Sigmoid colon (tissue), 7 donors: ENCODE measurements at regions of chr10 and their contacts with region 1.

Region 1: DNA sequence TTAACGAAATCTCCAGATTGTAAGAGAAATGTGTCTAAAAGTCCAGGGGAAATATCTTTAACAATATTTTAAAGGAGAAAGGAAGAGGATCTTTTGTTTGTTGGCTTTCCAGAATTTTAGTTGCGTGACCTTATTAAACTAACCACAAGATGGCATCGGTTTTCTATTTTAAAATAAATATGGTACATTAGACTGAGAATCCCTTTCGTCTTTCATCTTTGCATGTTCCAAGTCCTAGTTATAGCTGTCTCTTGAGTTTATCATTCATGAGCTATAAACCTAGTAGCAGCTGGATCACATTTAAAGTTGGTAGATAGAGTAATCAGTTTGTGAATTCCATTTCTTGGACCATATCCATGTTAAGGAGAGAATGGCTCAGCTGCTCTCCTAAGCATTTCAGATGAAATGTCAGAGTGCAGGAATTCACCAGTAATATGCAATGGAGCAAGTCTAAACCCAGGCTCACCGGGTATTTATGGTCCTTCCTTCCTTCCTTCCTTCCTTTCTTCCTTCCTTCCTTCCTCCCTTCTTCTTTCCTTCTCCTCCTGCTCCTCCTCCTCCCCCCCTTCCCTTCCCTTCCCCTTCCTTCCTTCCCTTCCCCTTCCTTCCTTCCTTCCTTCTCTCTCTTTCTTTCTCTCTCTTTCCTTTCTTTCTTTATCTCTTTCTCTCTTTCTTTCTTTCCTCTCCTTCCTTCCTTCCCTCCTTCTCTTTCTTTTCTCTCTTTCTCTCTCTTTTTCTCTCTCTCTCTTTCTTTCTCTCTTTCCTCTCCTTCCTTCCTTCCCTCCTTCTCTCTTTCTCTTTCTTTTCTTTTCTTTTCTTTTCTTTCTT is 57.8 kb upstream of the RAB18 start:
- DNase-seq: no peak
- H3K4me3 ChIP-seq: no peak overlapping the region
- H3K27ac ChIP-seq: peak overlapping the region in 3 of 4 donors; percentile 22 to 62 (median 45)
- H3K4me1 ChIP-seq: peaks cover 0 to 4% (median 0%) of the 10 kb centered on the region in 4 donors
- H3K27me3 ChIP-seq: no peaks in the 10 kb centered on the region
- CTCF ChIP-seq: peak; percentile 8 to 47 (median 29)
- EP300 ChIP-seq: no peak
- POLR2A ChIP-seq: no peak

Region 2: GRCh38 chr10:27536437-27536836 is 90.1 kb after region 1 on chr10:
- intact Hi-C with region 1: loop called (anchors 10 kb)
- DNase-seq: no peak
- H3K4me3 ChIP-seq: no peak overlapping the region
- H3K27ac ChIP-seq: no peak overlapping the region
- H3K4me1 ChIP-seq: peaks cover 0 to 25% (median 14%) of the 10 kb centered on the region in 4 donors
- H3K27me3 ChIP-seq: no peaks in the 10 kb centered on the region
- CTCF ChIP-seq: no peak
- EP300 ChIP-seq: no peak
- POLR2A ChIP-seq: no peak

Region 3: GRCh38 chr10:27658788-27659187 is 212.5 kb after region 1 on chr10:
- intact Hi-C with region 1: loop called (anchors 5 kb)
- DNase-seq: no peak
- H3K4me3 ChIP-seq: no peak overlapping the region
- H3K27ac ChIP-seq: no peak overlapping the region
- H3K4me1 ChIP-seq: no peaks in the 10 kb centered on the region
- H3K27me3 ChIP-seq: no peaks in the 10 kb centered on the region
- CTCF ChIP-seq: no peak
- EP300 ChIP-seq: no peak
- POLR2A ChIP-seq: no peak

Region 4: DNA sequence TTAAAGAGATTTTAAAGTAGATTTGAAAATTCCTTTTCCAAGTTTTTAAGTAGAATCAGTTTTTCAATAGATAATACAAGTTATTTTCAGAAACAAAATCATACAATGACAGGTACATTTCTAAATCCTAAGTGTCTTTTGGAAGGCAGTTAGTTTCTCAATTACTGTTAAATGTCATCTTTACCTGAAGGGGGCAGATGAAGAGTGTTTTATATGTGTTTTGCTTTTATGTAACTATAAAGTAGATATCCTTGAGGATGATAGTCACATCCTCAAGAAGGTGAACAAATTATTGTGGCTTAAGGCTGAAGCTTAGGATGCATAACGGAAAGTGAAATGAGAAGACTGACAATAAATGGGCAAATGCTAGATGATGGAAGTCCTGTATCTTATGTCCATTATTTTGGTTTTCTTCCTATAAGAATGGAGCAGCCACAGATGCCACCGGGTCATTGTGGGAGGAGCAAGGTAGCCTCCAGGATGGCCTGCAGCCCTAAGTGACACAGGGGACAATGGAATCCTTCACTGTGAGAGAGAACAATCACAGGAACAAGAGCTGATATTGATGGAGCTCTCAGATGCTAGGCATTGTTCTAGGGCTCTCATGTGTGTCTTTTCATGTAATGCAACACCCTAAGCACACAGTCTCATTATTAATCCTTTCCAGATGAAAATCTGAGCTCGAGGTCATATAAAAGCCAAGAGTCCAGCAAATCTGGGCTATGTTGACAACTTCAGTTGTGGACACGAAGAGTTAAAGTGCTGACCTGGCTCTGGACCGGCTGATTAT is 313.4 kb after region 1 on chr10:
- intact Hi-C with region 1: no loop called
- DNase-seq: no peak
- H3K4me3 ChIP-seq: no peak overlapping the region
- H3K27ac ChIP-seq: no peak overlapping the region
- H3K4me1 ChIP-seq: peaks cover 0 to 3% (median 0%) of the 10 kb centered on the region in 4 donors
- H3K27me3 ChIP-seq: no peaks in the 10 kb centered on the region
- CTCF ChIP-seq: no peak
- EP300 ChIP-seq: no peak
- POLR2A ChIP-seq: no peak

Region 5: DNA sequence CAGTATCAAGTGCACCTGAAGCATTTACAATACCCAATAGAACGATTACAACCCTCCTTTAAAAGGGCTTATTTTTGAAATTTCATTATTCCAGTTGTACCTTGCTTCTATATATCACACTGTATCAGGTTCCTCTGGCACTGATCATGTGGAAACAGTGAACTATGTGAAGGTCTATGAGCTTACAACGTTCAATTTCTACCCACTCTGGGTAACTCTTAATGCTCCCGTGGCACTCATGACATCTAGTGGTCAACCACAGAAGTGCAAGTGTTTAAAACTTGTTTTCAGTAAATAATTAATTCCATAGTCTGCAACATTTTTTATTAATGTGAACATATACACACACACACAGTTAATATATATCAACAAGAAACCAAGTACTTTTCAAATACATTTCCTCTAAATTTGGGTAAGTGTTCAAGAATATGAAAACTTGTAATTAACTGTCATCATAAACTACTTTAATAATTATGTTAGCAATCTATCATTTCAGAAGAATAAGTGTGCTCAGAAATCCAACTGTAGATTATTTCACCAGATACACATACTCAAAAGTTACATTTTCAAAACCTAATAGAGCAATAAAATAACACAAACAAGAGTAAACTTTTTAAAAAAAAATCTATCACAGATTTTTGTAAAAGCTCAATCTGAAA is 795.6 kb after region 1 on chr10:
- intact Hi-C with region 1: loop called (anchors 5 kb)
- DNase-seq: no peak
- H3K4me3 ChIP-seq: no peak overlapping the region
- H3K27ac ChIP-seq: no peak overlapping the region
- H3K4me1 ChIP-seq: peaks cover 0 to 24% (median 13%) of the 10 kb centered on the region in 4 donors
- H3K27me3 ChIP-seq: no peaks in the 10 kb centered on the region
- CTCF ChIP-seq: peak; percentile 69 to 95 (median 90)
- EP300 ChIP-seq: no peak
- POLR2A ChIP-seq: no peak

Region 6: DNA sequence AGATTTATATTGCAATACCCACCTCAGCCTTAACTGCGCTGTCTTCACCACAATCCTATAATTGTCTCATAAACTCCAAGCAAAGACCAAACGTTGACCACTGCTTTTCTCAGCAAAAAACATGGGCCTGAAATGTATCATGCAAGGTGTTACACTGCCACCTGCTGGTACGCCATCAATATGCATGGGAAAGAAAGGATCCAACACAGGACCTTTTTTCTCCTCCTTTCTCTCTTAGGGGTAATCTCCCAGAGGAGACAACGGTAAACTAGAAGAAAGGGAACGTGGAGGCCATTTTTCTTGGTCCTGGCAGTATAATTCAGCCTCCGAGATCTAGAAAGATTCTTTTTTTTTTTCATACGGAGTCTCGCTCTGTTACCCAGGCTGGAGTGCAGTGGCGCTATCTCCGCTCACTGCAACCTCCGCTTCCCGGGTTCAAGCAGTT is 935.6 kb after region 1 on chr10:
- intact Hi-C with region 1: loop called (anchors 10 kb)
- DNase-seq: peak; percentile 92
- H3K4me3 ChIP-seq: no peak overlapping the region
- H3K27ac ChIP-seq: peak overlapping the region in 1 of 4 donors; percentile 1
- H3K4me1 ChIP-seq: peaks cover 0 to 4% (median 1%) of the 10 kb centered on the region in 4 donors
- H3K27me3 ChIP-seq: no peaks in the 10 kb centered on the region
- CTCF ChIP-seq: peak; percentile 92 to 98 (median 96)
- EP300 ChIP-seq: no peak
- POLR2A ChIP-seq: no peak